Activated CD8-positive, alpha-beta T cell treated with anti-CD3 and anti-CD28 coated beads, Interleukin-2, amount 10 ng/mL, durations not matched to agents 7 days and 5 days (primary cell): ENCODE measurements at regions of chr2 and their contacts with region 1.

Region 1: GRCh38 chr2:42102024-42102590 is 54.3 kb downstream of the PKDCC start:
- DNase-seq: peak; percentile 88
- ATAC-seq: peak; percentile 78
- H3K4me3 Mint-ChIP-seq: peak overlapping the region; percentile 59
- H3K27ac Mint-ChIP-seq: peak overlapping the region; percentile 86
- H3K4me1 Mint-ChIP-seq: peaks cover 47% of the 10 kb centered on the region
- H3K27me3 Mint-ChIP-seq: no peaks in the 10 kb centered on the region

Region 2: GRCh38 chr2:42077343-42077742 is 24.8 kb before region 1 on chr2:
- CTCF ChIA-PET with region 1: no interaction called
- POLR2A ChIA-PET with region 1: no interaction called
- DNase-seq: no peak
- ATAC-seq: no peak
- H3K4me3 Mint-ChIP-seq: no peak overlapping the region
- H3K27ac Mint-ChIP-seq: no peak overlapping the region
- H3K4me1 Mint-ChIP-seq: no peaks in the 10 kb centered on the region
- H3K27me3 Mint-ChIP-seq: peaks cover 10% of the 10 kb centered on the region

Region 3: DNA sequence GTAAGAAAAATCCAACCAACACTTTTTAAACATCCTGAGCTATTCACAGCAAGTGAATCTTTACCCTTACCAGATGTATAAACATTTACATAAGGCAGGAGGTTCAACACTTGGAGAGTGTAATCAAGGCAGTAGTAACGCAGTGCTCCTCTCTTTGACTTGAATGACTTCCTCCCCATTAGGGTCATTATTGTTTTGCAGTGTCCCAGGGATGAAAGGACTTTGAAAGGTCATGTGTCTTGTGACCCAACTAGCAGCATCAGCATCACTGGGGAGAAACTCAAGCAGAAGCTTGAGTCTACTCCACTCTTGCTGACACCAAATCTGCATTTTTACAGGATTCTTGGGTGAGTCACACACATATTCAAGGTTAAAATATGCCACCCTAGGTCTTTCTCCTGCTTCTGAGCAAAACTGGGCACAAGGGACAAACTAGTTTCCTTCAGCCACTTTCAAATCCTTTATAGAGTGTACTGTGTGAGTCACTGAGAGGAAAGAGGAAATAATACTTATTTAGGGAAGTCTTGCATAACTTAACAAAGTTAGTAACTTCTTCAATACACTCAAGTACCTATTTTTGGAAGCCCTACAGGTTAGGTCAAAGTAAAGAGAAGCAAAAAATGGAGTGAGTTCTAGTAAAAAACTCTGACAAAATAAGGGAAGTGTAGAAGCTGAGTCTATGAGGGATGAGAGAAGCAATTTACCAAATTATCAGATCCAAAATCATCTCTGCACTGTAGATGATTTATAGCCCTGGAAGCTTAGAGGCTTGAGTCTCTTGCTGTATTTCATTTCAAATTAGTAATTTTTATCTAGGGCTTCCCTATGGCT is 16.0 kb after region 1 on chr2:
- CTCF ChIA-PET with region 1: interaction called, 28 read pairs
- POLR2A ChIA-PET with region 1: interaction called, 78 read pairs
- DNase-seq: no peak
- ATAC-seq: peak; percentile 67
- H3K4me3 Mint-ChIP-seq: no peak overlapping the region
- H3K27ac Mint-ChIP-seq: peak overlapping the region; percentile 41
- H3K4me1 Mint-ChIP-seq: peaks cover 39% of the 10 kb centered on the region
- H3K27me3 Mint-ChIP-seq: peaks cover 2% of the 10 kb centered on the region

Region 4: GRCh38 chr2:42127425-42128424 is 25.6 kb after region 1 on chr2:
- CTCF ChIA-PET with region 1: interaction called, 29 read pairs
- POLR2A ChIA-PET with region 1: interaction called, 78 read pairs
- DNase-seq: peak; percentile 49
- ATAC-seq: peak; percentile 25
- H3K4me3 Mint-ChIP-seq: peak overlapping the region; percentile 48
- H3K27ac Mint-ChIP-seq: peak overlapping the region; percentile 90
- H3K4me1 Mint-ChIP-seq: peaks cover 91% of the 10 kb centered on the region
- H3K27me3 Mint-ChIP-seq: no peaks in the 10 kb centered on the region

Region 5: GRCh38 chr2:42132966-42133641 is 31.0 kb after region 1 on chr2:
- CTCF ChIA-PET with region 1: interaction called, 29 read pairs
- POLR2A ChIA-PET with region 1: interaction called, 78 read pairs
- DNase-seq: peak; percentile 96
- ATAC-seq: peak; percentile 92
- H3K4me3 Mint-ChIP-seq: peak overlapping the region; percentile 65
- H3K27ac Mint-ChIP-seq: peak overlapping the region; percentile 95
- H3K4me1 Mint-ChIP-seq: peaks cover 89% of the 10 kb centered on the region
- H3K27me3 Mint-ChIP-seq: no peaks in the 10 kb centered on the region

Region 6: DNA sequence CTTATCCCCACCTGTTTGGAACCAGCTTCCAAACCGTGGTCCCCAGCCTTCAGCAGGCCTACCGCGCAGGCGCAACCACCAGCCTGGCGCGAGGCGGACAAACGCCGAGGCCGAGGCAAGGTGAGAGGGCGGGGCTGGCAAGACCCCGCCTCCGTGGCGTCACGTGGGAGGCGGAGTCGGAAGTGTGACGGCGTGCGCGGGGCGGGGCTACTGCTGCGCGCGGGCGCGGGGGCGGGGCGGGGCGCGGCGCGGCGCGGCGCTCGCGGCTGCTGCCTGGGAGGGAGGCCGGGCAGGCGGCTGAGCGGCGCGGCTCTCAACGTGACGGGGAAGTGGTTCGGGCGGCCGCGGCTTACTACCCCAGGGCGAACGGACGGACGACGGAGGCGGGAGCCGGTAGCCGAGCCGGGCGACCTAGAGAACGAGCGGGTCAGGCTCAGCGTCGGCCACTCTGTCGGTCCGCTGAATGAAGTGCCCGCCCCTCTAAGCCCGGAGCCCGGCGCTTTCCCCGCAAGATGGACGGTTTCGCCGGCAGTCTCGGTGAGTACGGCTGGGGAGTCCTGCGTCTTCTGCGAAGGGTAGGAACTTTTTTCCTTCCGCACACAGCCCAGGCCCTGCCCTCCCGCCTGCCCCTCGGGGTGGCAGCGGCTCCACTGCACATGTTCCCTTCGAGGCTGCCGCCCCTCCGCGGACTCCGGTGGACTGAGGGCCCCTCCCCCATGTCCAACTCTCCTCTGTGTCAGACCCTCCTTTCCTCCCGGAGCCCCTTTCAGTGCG is 67.2 kb after region 1 on chr2 and contains the start of gene EML4:
- CTCF ChIA-PET with region 1: interaction called, 48 read pairs
- POLR2A ChIA-PET with region 1: interaction called, 37 read pairs
- DNase-seq: peak; percentile 91
- ATAC-seq: peak; percentile 88
- H3K4me3 Mint-ChIP-seq: no peak within 1 kb of the TSS
- H3K27ac Mint-ChIP-seq: no peak within 1 kb of the TSS
- H3K4me1 Mint-ChIP-seq: peaks cover 23% of the 10 kb centered on the region
- H3K27me3 Mint-ChIP-seq: peaks cover 2% of the 10 kb centered on the region
- total RNA-seq, gene EML4: 88.0 to 89.7 TPM

Region 7: DNA sequence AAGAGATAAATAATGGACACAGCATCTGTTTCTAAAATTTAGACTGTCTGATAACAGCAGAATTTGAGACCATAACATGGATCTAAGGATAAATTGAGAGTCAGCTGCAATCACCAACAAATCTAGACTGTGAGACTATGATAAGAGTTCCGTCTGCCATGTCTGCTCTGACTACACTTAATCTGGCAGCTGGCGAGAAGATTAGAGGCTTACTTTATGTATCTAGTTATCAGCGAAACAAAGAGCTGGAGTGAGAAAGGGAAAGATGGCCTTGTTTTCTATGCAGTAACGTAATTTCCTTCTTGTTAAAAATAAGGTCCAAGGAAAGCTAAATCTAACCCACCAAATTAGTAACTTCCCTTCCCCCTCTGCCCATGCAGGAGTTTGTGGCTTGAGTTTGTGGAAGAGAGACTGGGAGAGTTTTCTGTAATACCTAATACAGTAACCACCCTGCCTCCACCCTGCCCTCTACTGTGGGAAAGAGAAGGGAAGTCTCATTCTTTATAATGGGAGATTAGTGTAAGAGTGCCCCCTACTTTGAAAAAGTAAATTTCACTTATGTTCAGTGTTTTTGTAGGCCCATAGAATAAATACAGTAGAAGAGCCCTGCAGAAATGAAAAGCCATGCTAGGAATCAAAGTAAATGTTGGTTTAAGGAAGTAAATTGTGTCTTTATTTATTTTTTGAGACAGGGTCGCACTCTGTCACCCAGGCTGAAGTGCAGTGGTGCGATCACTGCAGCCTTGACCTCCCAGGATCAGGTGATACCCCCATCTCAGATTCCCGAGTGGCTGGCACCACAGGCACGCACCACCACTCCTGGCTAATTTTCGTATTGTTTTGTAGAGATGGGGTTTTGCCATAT is 94.5 kb after region 1 on chr2:
- CTCF ChIA-PET with region 1: interaction called, 70 read pairs
- POLR2A ChIA-PET with region 1: no interaction called
- DNase-seq: peak; percentile 60
- ATAC-seq: peak; percentile 86
- H3K4me3 Mint-ChIP-seq: no peak overlapping the region
- H3K27ac Mint-ChIP-seq: peak overlapping the region; percentile 35
- H3K4me1 Mint-ChIP-seq: peaks cover 52% of the 10 kb centered on the region
- H3K27me3 Mint-ChIP-seq: no peaks in the 10 kb centered on the region